ENCODE measurements at regions of chr10 and their contacts with region 1.

Region 1: DNA sequence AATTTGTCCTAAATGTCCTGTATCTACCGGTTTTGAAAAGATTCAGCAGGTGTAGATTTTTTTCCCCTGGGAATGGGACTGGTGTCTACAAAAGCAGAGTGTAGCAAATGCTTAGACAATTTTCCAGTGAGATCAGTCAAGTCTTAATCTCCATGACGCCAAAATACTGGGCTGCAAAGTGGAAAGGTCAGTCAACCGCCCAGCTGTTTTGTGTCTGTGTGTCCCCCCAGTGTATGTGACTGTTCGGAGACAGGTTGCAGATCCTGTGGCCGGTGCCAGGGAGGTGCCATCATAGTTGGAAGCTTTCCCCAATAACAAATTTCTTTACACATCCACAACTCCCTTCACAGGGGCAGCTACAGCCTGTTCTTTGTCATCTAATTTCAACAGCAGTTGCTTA is 263.8 kb downstream of the ARHGAP12 start:
- DNase-seq: no peak
- H3K4me3 ChIP-seq: no peak overlapping the region
- H3K27ac ChIP-seq: no peak overlapping the region
- H3K4me1 ChIP-seq: peaks cover 16% of the 10 kb centered on the region
- H3K27me3 ChIP-seq: no peaks in the 10 kb centered on the region
- CTCF ChIP-seq: no peak
- POLR2A ChIP-seq: no peak

Region 2: DNA sequence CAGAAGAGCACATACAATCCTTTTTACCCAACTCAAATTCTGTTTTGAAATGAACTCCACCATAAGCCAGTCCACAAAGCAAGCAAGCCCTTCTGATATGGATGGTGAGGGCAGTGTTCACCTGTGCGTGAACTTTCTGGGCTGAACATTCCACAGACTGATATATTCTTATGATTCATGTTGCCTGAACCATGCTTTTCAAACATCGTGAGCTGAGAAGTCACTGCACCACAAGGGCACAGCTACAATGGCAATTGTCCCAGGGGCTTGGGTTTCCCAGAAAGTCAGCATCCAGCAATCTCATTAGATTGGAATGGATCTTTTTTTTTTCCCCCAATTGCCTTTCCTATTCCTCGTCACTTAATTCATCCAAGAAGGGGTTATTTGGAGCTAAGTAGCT is 546.2 kb before region 1 on chr10:
- intact Hi-C with region 1: no loop called
- DNase-seq: no peak
- H3K4me3 ChIP-seq: no peak overlapping the region
- H3K27ac ChIP-seq: no peak overlapping the region
- H3K4me1 ChIP-seq: peaks cover 11% of the 10 kb centered on the region
- H3K27me3 ChIP-seq: no peaks in the 10 kb centered on the region
- CTCF ChIP-seq: no peak
- POLR2A ChIP-seq: no peak

Region 3: DNA sequence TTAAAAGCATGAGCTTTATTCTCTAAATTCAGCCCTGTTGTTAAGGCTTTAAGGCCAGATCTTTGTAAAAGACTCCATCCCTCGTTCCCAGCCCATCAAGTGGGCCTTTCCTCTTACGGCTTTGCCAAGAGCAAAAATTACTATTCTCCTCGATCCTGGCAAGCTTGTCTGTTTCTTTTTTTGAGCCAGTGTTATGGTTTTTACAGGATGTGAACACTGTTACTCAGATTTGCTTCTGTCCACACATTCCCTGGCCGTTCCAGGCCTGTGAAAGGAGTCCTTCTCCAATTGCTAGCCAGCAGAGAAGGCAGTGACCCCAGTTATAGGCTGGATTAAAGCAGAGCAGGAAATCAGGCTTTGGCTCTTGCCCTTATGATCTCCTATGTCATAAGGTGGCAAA is 729.1 kb after region 1 on chr10:
- intact Hi-C with region 1: loop called (anchors 5 kb)
- DNase-seq: no peak
- H3K4me3 ChIP-seq: no peak overlapping the region
- H3K27ac ChIP-seq: no peak overlapping the region
- H3K4me1 ChIP-seq: no peaks in the 10 kb centered on the region
- H3K27me3 ChIP-seq: no peaks in the 10 kb centered on the region
- CTCF ChIP-seq: no peak
- POLR2A ChIP-seq: no peak